ENCODE measurements at regions of chr15 and their contacts with region 1.

Region 1: GRCh38 chr15:79596051-79596507 is 163.9 kb downstream of the MINAR1 start:
- DNase-seq: peak; percentile 89 to 94 (median 93)
- H3K4me3 ChIP-seq: no peak overlapping the region
- H3K27ac ChIP-seq: no peak overlapping the region
- H3K4me1 ChIP-seq: no peaks in the 10 kb centered on the region
- H3K27me3 ChIP-seq: peaks cover 0 to 18% (median 5%) of the 10 kb centered on the region in 5 experiments

Region 2: GRCh38 chr15:79380755-79381497 is 215.2 kb before region 1 on chr15:
- CTCF ChIA-PET with region 1: interaction called, 77 read pairs
- POLR2A ChIA-PET with region 1: no interaction called
- DNase-seq: peak; percentile 52 to 83 (median 69)
- H3K4me3 ChIP-seq: no peak overlapping the region
- H3K27ac ChIP-seq: no peak overlapping the region
- H3K4me1 ChIP-seq: no peaks in the 10 kb centered on the region
- H3K27me3 ChIP-seq: no peaks in the 10 kb centered on the region

Region 3: DNA sequence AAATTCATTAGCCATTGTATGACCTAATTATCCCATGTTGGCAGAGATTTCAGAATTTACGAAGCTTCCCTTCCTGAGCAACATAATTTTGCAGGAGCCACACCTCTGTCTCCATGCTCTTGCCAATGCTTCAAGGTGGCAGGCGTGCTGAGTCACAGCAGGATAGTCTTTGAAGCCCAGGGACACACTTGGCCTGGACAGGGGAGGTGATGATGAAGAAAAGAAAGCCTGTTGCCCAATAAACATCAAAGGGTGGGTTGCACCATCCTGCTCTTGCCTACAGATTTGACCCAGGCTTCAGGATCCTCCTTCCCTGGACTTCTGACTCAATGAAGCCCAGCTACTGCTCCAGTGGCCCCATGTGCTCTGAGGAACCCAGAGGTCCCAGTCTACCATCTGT is 46.9 kb before region 1 on chr15:
- CTCF ChIA-PET with region 1: no interaction called
- POLR2A ChIA-PET with region 1: no interaction called
- DNase-seq: no peak
- H3K4me3 ChIP-seq: no peak overlapping the region
- H3K27ac ChIP-seq: no peak overlapping the region
- H3K4me1 ChIP-seq: no peaks in the 10 kb centered on the region
- H3K27me3 ChIP-seq: peaks cover 0 to 10% (median 3%) of the 10 kb centered on the region in 5 experiments

Measured in common myeloid progenitor, CD34-positive (primary cell).